ENCODE measurements at regions of chr13 and their contacts with region 1.

Region 1: GRCh38 chr13:26698392-26699196 is 62.0 kb downstream of the GPR12 start:
- DNase-seq: peak; percentile 94
- H3K4me3 Mint-ChIP-seq: no peak overlapping the region
- H3K27ac Mint-ChIP-seq: no peak overlapping the region
- H3K4me1 Mint-ChIP-seq: no peaks in the 10 kb centered on the region
- H3K27me3 Mint-ChIP-seq: peaks cover 2% of the 10 kb centered on the region

Region 2: GRCh38 chr13:26482451-26483197 is 216.0 kb before region 1 on chr13:
- intact Hi-C with region 1: loop called (anchors 1 kb)
- DNase-seq: peak; percentile 89
- H3K4me3 Mint-ChIP-seq: no peak overlapping the region
- H3K27ac Mint-ChIP-seq: peak overlapping the region; percentile 21
- H3K4me1 Mint-ChIP-seq: peaks cover 4% of the 10 kb centered on the region
- H3K27me3 Mint-ChIP-seq: no peaks in the 10 kb centered on the region

Measured in activated CD4-positive, alpha-beta T cell treated with anti-CD3 and anti-CD28 coated beads, Interleukin-2, amount 10 ng/mL, durations not matched to agents 24 days and 14 days (primary cell).